ENCODE measurements at regions of chr3 and their contacts with region 1.

Region 1: DNA sequence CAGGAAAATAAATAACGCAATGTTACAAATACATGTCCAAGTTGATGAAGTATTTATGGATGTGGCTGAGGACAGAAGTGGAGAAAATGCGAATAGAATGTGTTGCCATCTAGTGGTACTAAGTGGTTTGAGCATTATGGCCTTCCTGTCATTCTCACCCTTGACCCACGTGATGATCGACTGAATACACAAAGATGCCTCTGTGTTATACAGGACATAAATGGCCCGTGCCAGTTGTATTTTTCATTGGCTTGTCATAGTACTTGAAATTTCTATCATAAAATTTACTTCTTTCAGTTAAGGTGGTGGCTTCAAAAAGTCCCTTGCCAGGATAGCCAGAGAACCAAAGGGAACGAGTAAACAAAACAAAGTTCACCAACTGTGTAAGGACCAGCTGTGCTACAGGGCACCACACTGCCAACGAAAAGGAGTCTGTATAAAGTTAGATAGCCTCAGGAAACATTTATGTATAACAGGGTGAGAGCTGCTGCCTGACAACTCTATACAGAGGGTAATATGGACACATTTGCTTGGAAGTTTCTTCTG is 103.7 kb downstream of the MYH15 start:
- DNase-seq: no peak
- ATAC-seq: peak; percentile 87
- H3K4me3 Mint-ChIP-seq: peak overlapping the region; percentile 35
- H3K27ac Mint-ChIP-seq: peak overlapping the region; percentile 87
- H3K4me1 Mint-ChIP-seq: peaks cover 28% of the 10 kb centered on the region
- H3K27me3 Mint-ChIP-seq: no peaks in the 10 kb centered on the region
- CTCF ChIP-seq: no peak

Region 2: GRCh38 chr3:107676469-107677309 is 730.0 kb before region 1 on chr3:
- CTCF ChIA-PET with region 1: no interaction called
- POLR2A ChIA-PET with region 1: no interaction called
- intact Hi-C with region 1: loop called (anchors 5 kb)
- DNase-seq: no peak
- ATAC-seq: no peak
- H3K4me3 Mint-ChIP-seq: peak overlapping the region; percentile 42
- H3K27ac Mint-ChIP-seq: peak overlapping the region; percentile 67
- H3K4me1 Mint-ChIP-seq: peaks cover 53% of the 10 kb centered on the region
- H3K27me3 Mint-ChIP-seq: no peaks in the 10 kb centered on the region
- CTCF ChIP-seq: no peak

Region 3: DNA sequence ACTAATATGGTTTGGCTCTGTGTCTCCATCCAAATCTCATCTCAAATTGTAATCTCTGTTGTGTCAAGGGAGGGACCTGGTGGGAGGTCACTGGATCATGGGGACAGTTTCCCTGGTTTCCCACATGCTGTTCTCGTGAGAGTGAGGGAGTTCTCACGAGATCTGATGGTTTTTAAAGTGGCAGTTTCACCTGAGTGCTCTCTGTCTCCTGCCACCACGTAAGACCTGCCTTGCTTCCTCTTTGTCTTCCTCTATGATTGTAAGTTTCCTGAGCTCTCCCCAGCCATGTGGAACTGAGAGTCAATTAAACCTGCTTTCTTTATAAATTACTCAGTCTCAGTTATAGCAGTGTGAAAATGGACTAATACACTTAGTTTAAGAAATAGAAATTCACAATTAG is 544.8 kb before region 1 on chr3:
- CTCF ChIA-PET with region 1: no interaction called
- POLR2A ChIA-PET with region 1: no interaction called
- intact Hi-C with region 1: loop called (anchors 5 kb)
- DNase-seq: peak; percentile 18
- ATAC-seq: peak; percentile 96
- H3K4me3 Mint-ChIP-seq: peak overlapping the region; percentile 60
- H3K27ac Mint-ChIP-seq: peak overlapping the region; percentile 73
- H3K4me1 Mint-ChIP-seq: peaks cover 16% of the 10 kb centered on the region
- H3K27me3 Mint-ChIP-seq: no peaks in the 10 kb centered on the region
- CTCF ChIP-seq: no peak

Region 4: GRCh38 chr3:108036984-108037741 is 369.6 kb before region 1 on chr3:
- CTCF ChIA-PET with region 1: no interaction called
- POLR2A ChIA-PET with region 1: no interaction called
- intact Hi-C with region 1: loop called (anchors 5 kb)
- DNase-seq: no peak
- ATAC-seq: peak; percentile 67
- H3K4me3 Mint-ChIP-seq: peak overlapping the region; percentile 17
- H3K27ac Mint-ChIP-seq: peak overlapping the region; percentile 78
- H3K4me1 Mint-ChIP-seq: peaks cover 31% of the 10 kb centered on the region
- H3K27me3 Mint-ChIP-seq: no peaks in the 10 kb centered on the region
- CTCF ChIP-seq: no peak

Region 5: GRCh38 chr3:108221911-108222852 is 184.6 kb before region 1 on chr3 and contains the start of gene IFT57:
- CTCF ChIA-PET with region 1: no interaction called
- POLR2A ChIA-PET with region 1: interaction called, 4 read pairs
- intact Hi-C with region 1: loop called (anchors 1 kb)
- DNase-seq: peak; percentile 95
- ATAC-seq: peak; percentile 91
- H3K4me3 Mint-ChIP-seq: peak within 1 kb of the TSS; percentile 100
- H3K27ac Mint-ChIP-seq: peak within 1 kb of the TSS; percentile 100
- H3K4me1 Mint-ChIP-seq: peaks cover 66% of the 10 kb centered on the region
- H3K27me3 Mint-ChIP-seq: no peaks in the 10 kb centered on the region
- CTCF ChIP-seq: no peak
- total RNA-seq, gene IFT57: 63.2 and 64.9 TPM in 2 replicates

Measured in activated B cell treated with CpG ODN at 0.5 μM for 24 hours (primary cell).